Activated CD4-positive, alpha-beta memory T cell treated with anti-CD3 and anti-CD28 coated beads, Interleukin-2, amount 10 ng/mL, durations not matched to agents 7 days and 5 days (primary cell): ENCODE measurements at regions of chr13 and their contacts with region 1.

Region 1: GRCh38 chr13:49443704-49444523 is at the starts of genes CAB39L and SETDB2:
- DNase-seq: peak; percentile 100
- H3K4me3 Mint-ChIP-seq: peak within 1 kb of the TSS; percentile 95
- H3K27ac Mint-ChIP-seq: peak within 1 kb of the TSS; percentile 98
- H3K4me1 Mint-ChIP-seq: peaks cover 56% of the 10 kb centered on the region
- H3K27me3 Mint-ChIP-seq: no peaks in the 10 kb centered on the region
- total RNA-seq, gene CAB39L: 5.5 TPM
- total RNA-seq, gene SETDB2: 14.8 to 16.0 TPM

Region 2: GRCh38 chr13:49247643-49248621 is 196.0 kb before region 1 on chr13 and contains the start of gene CDADC1:
- CTCF ChIA-PET with region 1: no interaction called
- POLR2A ChIA-PET with region 1: interaction called, 20 read pairs
- DNase-seq: peak; percentile 95
- H3K4me3 Mint-ChIP-seq: peak within 1 kb of the TSS; percentile 97
- H3K27ac Mint-ChIP-seq: peak within 1 kb of the TSS; percentile 90
- H3K4me1 Mint-ChIP-seq: peaks cover 43% of the 10 kb centered on the region
- H3K27me3 Mint-ChIP-seq: peaks cover 18% of the 10 kb centered on the region
- total RNA-seq, gene CDADC1: 12.8 to 16.7 TPM

Region 3: DNA sequence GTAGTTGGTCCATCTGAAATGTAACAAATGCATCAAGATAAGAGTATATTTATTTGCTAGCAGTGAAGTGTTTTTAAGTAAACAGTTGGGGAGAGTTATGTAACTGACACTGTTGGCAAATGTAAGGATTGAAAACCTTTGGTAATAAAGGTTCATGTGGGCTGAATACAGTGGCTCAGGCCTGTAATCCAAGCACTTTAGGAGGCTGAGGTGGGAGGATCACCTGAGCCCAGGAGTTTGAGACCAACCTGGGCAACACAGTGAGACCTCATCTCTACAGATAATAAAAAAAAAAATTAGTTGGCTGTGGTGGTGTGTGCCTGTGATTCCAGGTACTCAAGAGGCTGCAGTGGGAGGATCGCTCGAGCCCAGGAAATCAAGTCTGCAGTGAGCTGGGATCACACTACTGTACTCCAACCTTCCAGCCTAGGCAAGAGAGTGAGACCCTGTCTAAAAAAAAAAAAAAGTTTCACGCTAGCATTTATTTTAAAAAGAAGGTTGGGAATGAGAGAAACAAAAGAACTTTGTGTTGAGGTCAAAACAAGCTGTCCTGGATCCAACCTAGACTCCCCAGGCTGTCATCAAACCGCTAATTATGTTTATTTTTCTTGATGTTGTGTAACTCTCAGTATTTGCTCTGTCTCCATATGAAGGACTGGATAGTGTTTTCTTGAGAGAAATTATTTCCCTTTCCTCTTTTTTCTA is 20.9 kb after region 1 on chr13:
- CTCF ChIA-PET with region 1: interaction called, 5 read pairs
- POLR2A ChIA-PET with region 1: interaction called, 11 read pairs
- DNase-seq: no peak
- H3K4me3 Mint-ChIP-seq: no peak overlapping the region
- H3K27ac Mint-ChIP-seq: no peak overlapping the region
- H3K4me1 Mint-ChIP-seq: no peaks in the 10 kb centered on the region
- H3K27me3 Mint-ChIP-seq: no peaks in the 10 kb centered on the region

Region 4: GRCh38 chr13:49540552-49540951 is 96.6 kb after region 1 on chr13:
- CTCF ChIA-PET with region 1: no interaction called
- POLR2A ChIA-PET with region 1: interaction called, 17 read pairs
- DNase-seq: peak; percentile 20
- H3K4me3 Mint-ChIP-seq: peak overlapping the region; percentile 54
- H3K27ac Mint-ChIP-seq: peak overlapping the region; percentile 70
- H3K4me1 Mint-ChIP-seq: peaks cover 21% of the 10 kb centered on the region
- H3K27me3 Mint-ChIP-seq: no peaks in the 10 kb centered on the region

Region 5: DNA sequence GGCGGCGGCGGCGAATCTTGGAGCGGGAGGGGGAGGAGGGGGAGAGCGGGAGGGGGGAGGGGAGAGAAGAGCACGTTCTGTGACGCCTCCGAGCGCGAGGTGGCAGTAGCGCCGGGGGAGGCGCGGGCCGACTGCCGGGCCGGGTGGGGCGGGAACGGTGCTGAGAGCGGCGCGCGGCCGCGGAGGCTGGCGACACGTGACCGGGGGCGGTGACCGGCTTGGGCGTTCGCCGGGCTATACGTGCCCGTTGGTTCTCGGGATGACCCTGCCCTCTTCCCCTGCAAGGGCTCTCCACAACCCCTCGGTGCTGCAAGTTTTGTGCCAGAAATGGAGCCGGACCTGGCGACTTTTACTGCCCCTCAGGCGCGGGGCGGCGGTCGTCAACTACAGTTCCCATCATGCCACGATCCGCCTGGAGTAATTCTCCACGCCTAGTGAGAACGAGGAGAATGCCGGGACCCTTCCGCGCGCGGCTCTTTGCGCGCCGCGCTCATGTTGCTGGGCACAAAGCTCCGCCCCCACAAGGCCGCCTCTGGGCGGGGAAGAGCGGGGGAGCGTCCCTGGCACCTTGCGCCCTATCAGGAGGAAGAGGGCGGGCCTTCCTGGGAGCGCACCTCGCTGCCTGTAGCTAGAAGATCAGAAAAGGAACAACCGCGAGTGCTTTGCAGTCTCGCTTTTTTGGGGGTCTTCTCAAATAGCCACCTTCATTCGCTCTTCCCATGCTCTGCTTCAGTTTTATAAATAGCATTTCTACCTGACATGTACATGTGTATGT is 348.8 kb after region 1 on chr13 and contains the start of gene KPNA3:
- CTCF ChIA-PET with region 1: no interaction called
- POLR2A ChIA-PET with region 1: interaction called, 21 read pairs
- DNase-seq: peak; percentile 96
- H3K4me3 Mint-ChIP-seq: peak within 1 kb of the TSS; percentile 95
- H3K27ac Mint-ChIP-seq: peak within 1 kb of the TSS; percentile 97
- H3K4me1 Mint-ChIP-seq: peaks cover 32% of the 10 kb centered on the region
- H3K27me3 Mint-ChIP-seq: peaks cover 4% of the 10 kb centered on the region
- total RNA-seq, gene KPNA3: 34.9 to 36.1 TPM